Activated naive CD4-positive, alpha-beta T cell treated with anti-CD3 and anti-CD28 coated beads for 36 hours (primary cell): ENCODE measurements at regions of chr7 and their contacts with region 1.

Region 1: GRCh38 chr7:33932832-33933468 is 27.6 kb downstream of the BMPER start:
- DNase-seq: peak; percentile 77
- H3K4me3 Mint-ChIP-seq: no peak overlapping the region
- H3K27ac Mint-ChIP-seq: no peak overlapping the region
- H3K4me1 Mint-ChIP-seq: no peaks in the 10 kb centered on the region
- H3K27me3 Mint-ChIP-seq: peaks cover 20% of the 10 kb centered on the region

Region 2: GRCh38 chr7:32761451-32762205 is 1171.3 kb before region 1 on chr7:
- CTCF ChIA-PET with region 1: interaction called, 3 read pairs
- intact Hi-C with region 1: loop called (anchors 10 kb)
- DNase-seq: no peak
- H3K4me3 Mint-ChIP-seq: no peak overlapping the region
- H3K27ac Mint-ChIP-seq: no peak overlapping the region
- H3K4me1 Mint-ChIP-seq: peaks cover 9% of the 10 kb centered on the region
- H3K27me3 Mint-ChIP-seq: peaks cover 40% of the 10 kb centered on the region

Region 3: DNA sequence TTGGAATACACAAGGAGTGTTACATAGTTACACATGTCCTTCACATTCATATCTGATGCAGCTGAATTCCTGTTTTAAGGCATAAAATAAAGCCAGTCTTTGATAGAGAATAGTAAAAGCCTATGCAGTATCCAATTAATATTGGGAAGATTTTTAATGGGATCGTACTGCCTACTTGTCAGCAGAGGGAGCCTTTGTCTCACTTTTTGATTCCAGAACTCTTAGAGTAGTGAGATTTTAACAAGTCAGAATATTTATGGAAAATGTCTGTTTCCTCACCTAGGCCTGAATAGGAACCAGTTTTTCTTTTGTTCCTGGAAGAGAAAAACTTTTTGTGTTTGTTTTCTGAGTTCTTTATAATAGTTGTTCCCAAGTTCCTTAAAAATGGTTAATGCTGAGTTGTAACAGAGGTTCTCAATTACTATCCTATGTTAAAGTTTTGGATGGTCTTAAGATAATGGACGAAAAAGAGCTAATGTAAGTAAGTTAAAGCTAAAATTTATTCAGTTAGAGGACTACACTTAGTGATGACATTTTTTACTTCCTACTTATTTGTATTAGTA is 689.5 kb before region 1 on chr7:
- CTCF ChIA-PET with region 1: interaction called, 9 read pairs
- intact Hi-C with region 1: loop called (anchors 2 kb)
- DNase-seq: no peak
- H3K4me3 Mint-ChIP-seq: no peak overlapping the region
- H3K27ac Mint-ChIP-seq: no peak overlapping the region
- H3K4me1 Mint-ChIP-seq: no peaks in the 10 kb centered on the region
- H3K27me3 Mint-ChIP-seq: no peaks in the 10 kb centered on the region

Region 4: DNA sequence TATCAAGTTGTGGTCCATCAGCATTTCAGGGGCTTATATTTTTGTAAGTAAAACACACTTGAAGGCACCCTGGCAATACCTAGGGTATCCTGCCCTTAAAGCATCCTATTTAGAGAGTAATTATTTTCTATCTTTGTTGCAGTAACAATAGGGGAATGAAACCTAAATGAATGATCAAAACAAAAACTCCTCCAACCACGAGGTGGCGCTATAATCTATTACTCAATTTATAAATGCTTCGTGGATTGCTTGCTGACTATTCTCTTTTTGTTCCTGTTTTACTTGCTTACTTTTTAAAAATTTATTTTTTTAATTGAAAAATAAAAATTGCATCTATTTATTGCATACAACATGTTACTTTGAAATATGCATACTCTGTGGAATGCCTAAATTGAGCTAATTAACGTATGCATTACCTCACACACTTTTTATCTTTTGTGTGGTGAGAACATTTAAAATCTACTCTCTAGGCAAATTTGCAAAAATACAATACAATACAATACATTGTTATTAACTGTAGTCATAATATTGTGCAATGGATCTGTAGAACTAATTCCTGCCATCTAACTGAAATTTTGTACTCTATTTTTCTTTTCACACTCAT is 175.3 kb before region 1 on chr7:
- CTCF ChIA-PET with region 1: interaction called, 13 read pairs
- intact Hi-C with region 1: loop called (anchors 1 kb)
- DNase-seq: peak; percentile 50
- H3K4me3 Mint-ChIP-seq: no peak overlapping the region
- H3K27ac Mint-ChIP-seq: no peak overlapping the region
- H3K4me1 Mint-ChIP-seq: no peaks in the 10 kb centered on the region
- H3K27me3 Mint-ChIP-seq: no peaks in the 10 kb centered on the region